ENCODE measurements at regions of chr1 and their contacts with region 1.

Region 1: GRCh38 chr1:26378088-26378878 is 5.7 kb upstream of the ZNF683 start:
- DNase-seq: peak; percentile 63 to 96 (median 85)
- ATAC-seq: peak; percentile 91
- H3K4me3 ChIP-seq: peak overlapping the region; percentile 7 to 19
- H3K4me3 Mint-ChIP-seq: peak overlapping the region; percentile 59
- H3K27ac ChIP-seq: peak overlapping the region; percentile 54 to 76
- H3K27ac Mint-ChIP-seq: peak overlapping the region; percentile 91
- H3K4me1 ChIP-seq: peaks cover 65% of the 10 kb centered on the region
- H3K4me1 Mint-ChIP-seq: peaks cover 68% of the 10 kb centered on the region
- H3K27me3 ChIP-seq: no peaks in the 10 kb centered on the region
- H3K27me3 Mint-ChIP-seq: no peaks in the 10 kb centered on the region
- CTCF ChIP-seq: no peak

Region 2: DNA sequence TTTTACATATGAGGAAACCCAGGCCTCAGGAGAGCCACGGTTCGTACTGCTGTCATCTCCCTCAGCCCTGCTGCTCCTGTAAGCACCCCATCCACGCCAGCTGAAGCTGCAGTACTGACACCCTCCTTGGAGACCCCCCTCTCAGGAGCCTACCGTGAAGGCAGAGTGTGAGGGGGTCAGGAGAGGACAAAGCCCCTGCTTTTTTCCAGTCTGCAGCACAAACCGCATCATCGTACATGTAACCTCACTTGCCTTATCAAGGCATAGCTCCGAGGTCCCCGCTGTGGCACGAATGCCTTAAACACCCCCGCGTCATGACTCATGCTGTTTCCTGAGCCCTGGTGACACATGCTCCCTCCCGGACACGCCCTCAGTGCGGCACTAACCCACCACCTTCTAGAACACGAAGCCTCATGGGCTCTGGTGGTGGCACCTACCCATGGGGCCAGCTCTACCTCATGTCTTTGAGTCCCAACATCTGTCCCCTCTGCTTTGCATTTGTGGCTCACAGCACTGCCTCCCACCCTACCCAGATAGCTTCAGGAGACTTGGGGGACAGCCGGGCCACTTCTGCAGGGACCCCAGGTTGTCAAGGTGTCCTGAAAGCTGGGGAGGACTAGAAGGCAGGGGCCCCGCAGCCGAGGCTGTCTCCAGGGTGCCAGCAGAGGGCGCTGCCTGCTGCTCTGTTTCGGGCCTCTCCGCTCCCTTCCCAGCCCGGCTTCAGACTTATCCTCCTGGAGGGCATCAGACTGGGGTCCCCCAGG is 93.5 kb before region 1 on chr1:
- CTCF ChIA-PET with region 1: interaction called, 11 read pairs
- POLR2A ChIA-PET with region 1: interaction called, 19 read pairs
- intact Hi-C with region 1: loop called (anchors 1 to 5 kb)
- DNase-seq: peak; percentile 82 to 98 (median 94)
- ATAC-seq: peak; percentile 72
- H3K4me3 ChIP-seq: peak overlapping the region; percentile 27 to 28
- H3K4me3 Mint-ChIP-seq: peak overlapping the region; percentile 82
- H3K27ac ChIP-seq: peak overlapping the region; percentile 61 to 76
- H3K27ac Mint-ChIP-seq: peak overlapping the region; percentile 100
- H3K4me1 ChIP-seq: peaks cover 93% of the 10 kb centered on the region
- H3K4me1 Mint-ChIP-seq: peaks cover 92% of the 10 kb centered on the region
- H3K27me3 ChIP-seq: no peaks in the 10 kb centered on the region
- H3K27me3 Mint-ChIP-seq: no peaks in the 10 kb centered on the region
- CTCF ChIP-seq: peak; percentile 46

Region 3: DNA sequence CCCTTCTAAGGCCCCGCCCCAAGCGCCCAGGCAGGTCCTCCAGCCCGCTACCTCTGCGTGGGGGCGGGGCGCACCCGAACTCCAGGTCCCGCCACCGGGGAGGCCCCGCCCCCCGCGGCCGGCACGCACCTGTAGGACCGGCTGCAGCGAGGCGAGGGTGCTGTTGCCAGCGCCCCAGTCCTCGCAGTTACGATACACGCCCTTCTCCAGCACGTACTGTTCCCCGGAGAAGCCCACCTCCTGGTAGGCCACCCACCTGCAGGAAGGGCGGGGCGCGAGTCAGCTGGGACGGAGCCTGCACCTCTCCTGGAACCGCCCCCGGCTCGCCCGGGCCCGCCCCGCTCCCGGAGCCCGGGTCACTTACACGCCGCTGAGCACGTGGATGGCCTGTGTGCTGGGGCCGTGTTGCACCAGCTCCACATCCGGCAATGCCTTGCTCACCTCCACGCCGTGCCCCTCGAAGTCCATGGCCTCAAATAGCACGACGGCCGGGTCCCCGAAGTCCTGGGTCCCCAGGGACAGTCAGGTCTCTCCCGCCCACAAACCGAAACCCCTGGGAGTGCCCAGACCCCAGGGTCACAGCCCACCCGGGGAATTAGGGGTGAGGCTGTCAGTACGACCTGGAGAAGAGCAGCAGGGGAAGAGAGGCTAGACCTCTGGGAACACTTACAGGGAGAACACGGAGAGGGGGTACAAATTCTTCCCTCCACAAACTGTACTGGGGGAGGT is 41.6 kb before region 1 on chr1:
- CTCF ChIA-PET with region 1: interaction called, 3 read pairs
- POLR2A ChIA-PET with region 1: no interaction called
- intact Hi-C with region 1: loop called in 1 of 2 experiments (anchors 1 kb)
- DNase-seq: peak; percentile 67 to 91 (median 86)
- ATAC-seq: peak; percentile 86
- H3K4me3 ChIP-seq: peak overlapping the region; percentile 65 to 89
- H3K4me3 Mint-ChIP-seq: peak overlapping the region; percentile 87
- H3K27ac ChIP-seq: no peak overlapping the region
- H3K27ac Mint-ChIP-seq: no peak overlapping the region
- H3K4me1 ChIP-seq: peaks cover 18% of the 10 kb centered on the region
- H3K4me1 Mint-ChIP-seq: peaks cover 13% of the 10 kb centered on the region
- H3K27me3 ChIP-seq: no peaks in the 10 kb centered on the region
- H3K27me3 Mint-ChIP-seq: no peaks in the 10 kb centered on the region
- CTCF ChIP-seq: no peak

Region 4: GRCh38 chr1:26391450-26391849 is 13.2 kb after region 1 on chr1:
- CTCF ChIA-PET with region 1: interaction called, 20 read pairs
- POLR2A ChIA-PET with region 1: interaction called, 7 read pairs
- intact Hi-C with region 1: loop called in 1 of 2 experiments (anchors 1 kb)
- DNase-seq: peak in 7 of 9 experiments; percentile 32 to 80 (median 51)
- ATAC-seq: peak; percentile 72
- H3K4me3 ChIP-seq: no peak overlapping the region
- H3K4me3 Mint-ChIP-seq: no peak overlapping the region
- H3K27ac ChIP-seq: no peak overlapping the region
- H3K27ac Mint-ChIP-seq: no peak overlapping the region
- H3K4me1 ChIP-seq: peaks cover 27% of the 10 kb centered on the region
- H3K4me1 Mint-ChIP-seq: peaks cover 30% of the 10 kb centered on the region
- H3K27me3 ChIP-seq: peaks cover 0 to 6% of the 10 kb centered on the region in 2 experiments
- H3K27me3 Mint-ChIP-seq: no peaks in the 10 kb centered on the region
- CTCF ChIP-seq: peak; percentile 44

Region 5: GRCh38 chr1:26399034-26399433 is 20.8 kb after region 1 on chr1:
- CTCF ChIA-PET with region 1: interaction called, 20 read pairs
- POLR2A ChIA-PET with region 1: interaction called, 4 read pairs
- intact Hi-C with region 1: loop called in 1 of 2 experiments (anchors 1 kb)
- DNase-seq: no peak
- ATAC-seq: no peak
- H3K4me3 ChIP-seq: no peak overlapping the region
- H3K4me3 Mint-ChIP-seq: no peak overlapping the region
- H3K27ac ChIP-seq: no peak overlapping the region
- H3K27ac Mint-ChIP-seq: no peak overlapping the region
- H3K4me1 ChIP-seq: no peaks in the 10 kb centered on the region
- H3K4me1 Mint-ChIP-seq: peaks cover 3% of the 10 kb centered on the region
- H3K27me3 ChIP-seq: peaks cover 0 to 2% of the 10 kb centered on the region in 2 experiments
- H3K27me3 Mint-ChIP-seq: peaks cover 11% of the 10 kb centered on the region
- CTCF ChIP-seq: no peak

Region 6: DNA sequence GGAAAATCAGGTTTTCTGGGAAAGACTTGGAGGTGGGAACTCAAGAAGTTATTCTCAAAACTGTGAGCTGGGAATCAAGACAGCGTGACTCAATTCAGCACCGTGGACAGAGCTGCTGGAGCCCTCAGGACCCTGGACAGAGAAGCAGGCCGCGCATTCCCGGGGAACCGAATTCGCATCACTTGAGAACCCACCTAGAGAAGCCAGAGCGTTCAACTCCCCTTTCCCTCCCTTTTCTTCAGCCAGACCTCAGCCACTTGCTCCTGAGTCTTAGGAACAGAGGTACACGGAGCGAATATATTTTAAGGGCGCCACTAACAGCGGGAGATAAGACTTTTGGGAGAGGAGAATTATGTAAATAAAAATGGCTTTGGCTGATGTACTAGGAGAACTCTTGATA is 30.3 kb after region 1 on chr1:
- CTCF ChIA-PET with region 1: interaction called, 3 read pairs
- POLR2A ChIA-PET with region 1: no interaction called
- intact Hi-C with region 1: loop called in 1 of 2 experiments (anchors 2 kb)
- DNase-seq: peak; percentile 65 to 87 (median 81)
- ATAC-seq: peak; percentile 99
- H3K4me3 ChIP-seq: no peak overlapping the region
- H3K4me3 Mint-ChIP-seq: peak overlapping the region; percentile 62
- H3K27ac ChIP-seq: no peak overlapping the region
- H3K27ac Mint-ChIP-seq: no peak overlapping the region
- H3K4me1 ChIP-seq: peaks cover 17% of the 10 kb centered on the region
- H3K4me1 Mint-ChIP-seq: peaks cover 22% of the 10 kb centered on the region
- H3K27me3 ChIP-seq: peaks cover 26 to 42% of the 10 kb centered on the region in 2 experiments
- H3K27me3 Mint-ChIP-seq: peaks cover 54% of the 10 kb centered on the region
- CTCF ChIP-seq: no peak

Region 7: GRCh38 chr1:26602378-26602959 is 224.2 kb after region 1 on chr1:
- CTCF ChIA-PET with region 1: no interaction called
- POLR2A ChIA-PET with region 1: no interaction called
- intact Hi-C with region 1: no loop called
- DNase-seq: peak in 5 of 9 experiments; percentile 16 to 81 (median 49)
- ATAC-seq: peak; percentile 67
- H3K4me3 ChIP-seq: no peak overlapping the region
- H3K4me3 Mint-ChIP-seq: no peak overlapping the region
- H3K27ac ChIP-seq: no peak overlapping the region
- H3K27ac Mint-ChIP-seq: no peak overlapping the region
- H3K4me1 ChIP-seq: peaks cover 5% of the 10 kb centered on the region
- H3K4me1 Mint-ChIP-seq: peaks cover 8% of the 10 kb centered on the region
- H3K27me3 ChIP-seq: no peaks in the 10 kb centered on the region
- H3K27me3 Mint-ChIP-seq: no peaks in the 10 kb centered on the region
- CTCF ChIP-seq: peak; percentile 98